BJ (cell line): ENCODE measurements at regions of chrX and their contacts with region 1.

Region 1: DNA sequence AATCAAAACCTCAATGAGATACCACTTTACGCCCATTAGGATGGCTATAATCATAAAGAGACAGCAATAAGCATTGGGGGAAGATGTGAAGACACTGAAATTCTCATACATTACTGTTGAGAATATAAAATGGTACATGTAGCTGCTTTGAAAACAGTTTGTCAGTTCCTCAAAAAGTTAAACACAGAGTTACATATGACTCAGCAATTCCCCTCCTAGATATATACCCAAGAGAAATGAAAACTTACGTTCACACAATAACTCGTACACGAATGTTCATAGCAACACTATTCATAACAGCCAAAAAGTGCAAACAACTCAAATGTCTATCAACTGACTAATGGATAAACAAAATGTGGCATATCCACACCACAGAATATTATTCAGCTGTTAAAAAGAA is 36.6 kb downstream of the PHF8 start:
- DNase-seq: no peak
- H3K4me3 ChIP-seq: no peak overlapping the region
- H3K27me3 ChIP-seq: no peaks in the 10 kb centered on the region
- CTCF ChIP-seq: no peak

Region 2: DNA sequence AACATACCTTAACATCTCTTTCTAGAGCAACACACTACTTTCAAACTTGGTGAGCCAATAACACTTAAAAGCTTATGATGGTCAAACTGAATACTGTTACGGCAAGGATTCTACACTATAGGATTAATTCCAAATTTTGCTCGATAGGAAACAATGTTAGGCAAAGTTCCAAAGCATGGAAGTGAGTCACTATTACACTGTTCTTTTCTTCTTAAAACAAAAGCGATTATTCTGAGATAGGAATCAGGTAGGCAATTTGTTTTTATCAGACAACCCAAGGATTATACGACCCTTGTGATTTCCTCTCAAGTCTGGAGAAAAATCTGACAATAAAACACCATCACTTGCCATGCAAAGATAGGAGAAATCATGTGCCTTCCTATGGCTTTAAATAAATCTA is 402.7 kb before region 1 on chrX:
- CTCF ChIA-PET with region 1: no interaction called
- POLR2A ChIA-PET with region 1: no interaction called
- DNase-seq: no peak
- H3K4me3 ChIP-seq: no peak overlapping the region
- H3K27me3 ChIP-seq: no peaks in the 10 kb centered on the region
- CTCF ChIP-seq: no peak

Region 3: GRCh38 chrX:54564936-54565335 is 557.3 kb after region 1 on chrX:
- CTCF ChIA-PET with region 1: no interaction called
- POLR2A ChIA-PET with region 1: interaction called, 17 read pairs
- DNase-seq: no peak
- H3K4me3 ChIP-seq: no peak overlapping the region
- H3K27me3 ChIP-seq: no peaks in the 10 kb centered on the region
- CTCF ChIP-seq: no peak